Posterior vena cava (tissue), 2 donors: ENCODE measurements at regions of chr1 and their contacts with region 1.

Region 1: GRCh38 chr1:205273551-205273982 is 45.8 kb downstream of the TMCC2 start:
- DNase-seq: peak; percentile 95

Region 2: DNA sequence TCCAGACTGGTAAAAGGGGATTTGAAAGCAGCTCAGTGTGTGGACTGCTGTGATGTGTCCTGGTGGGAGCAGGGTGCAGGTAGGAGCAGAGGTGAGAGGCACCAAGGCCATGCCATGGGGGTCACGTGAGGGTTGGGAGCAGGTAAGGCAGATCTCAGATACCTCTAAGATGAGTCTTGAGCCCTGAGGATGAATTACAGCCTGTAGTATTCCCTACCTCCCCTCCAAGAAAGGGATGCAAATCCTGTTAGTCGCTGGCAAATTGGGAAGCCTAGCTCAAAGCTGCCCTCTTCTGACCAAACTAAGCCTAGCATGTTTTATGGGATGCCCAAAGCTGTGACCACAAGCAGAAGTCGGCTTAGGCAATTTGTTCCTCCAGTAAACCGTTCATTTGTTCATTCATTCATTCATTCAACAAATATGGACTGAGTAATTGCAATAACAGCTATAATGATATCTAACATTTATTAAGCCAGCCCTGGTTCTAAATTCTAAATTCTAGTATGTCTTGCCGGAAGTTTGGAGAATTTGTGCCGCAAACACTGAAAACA is 51.8 kb after region 1 on chr1:
- intact Hi-C with region 1: loop called (anchors 2 kb)
- DNase-seq: no peak

Region 3: DNA sequence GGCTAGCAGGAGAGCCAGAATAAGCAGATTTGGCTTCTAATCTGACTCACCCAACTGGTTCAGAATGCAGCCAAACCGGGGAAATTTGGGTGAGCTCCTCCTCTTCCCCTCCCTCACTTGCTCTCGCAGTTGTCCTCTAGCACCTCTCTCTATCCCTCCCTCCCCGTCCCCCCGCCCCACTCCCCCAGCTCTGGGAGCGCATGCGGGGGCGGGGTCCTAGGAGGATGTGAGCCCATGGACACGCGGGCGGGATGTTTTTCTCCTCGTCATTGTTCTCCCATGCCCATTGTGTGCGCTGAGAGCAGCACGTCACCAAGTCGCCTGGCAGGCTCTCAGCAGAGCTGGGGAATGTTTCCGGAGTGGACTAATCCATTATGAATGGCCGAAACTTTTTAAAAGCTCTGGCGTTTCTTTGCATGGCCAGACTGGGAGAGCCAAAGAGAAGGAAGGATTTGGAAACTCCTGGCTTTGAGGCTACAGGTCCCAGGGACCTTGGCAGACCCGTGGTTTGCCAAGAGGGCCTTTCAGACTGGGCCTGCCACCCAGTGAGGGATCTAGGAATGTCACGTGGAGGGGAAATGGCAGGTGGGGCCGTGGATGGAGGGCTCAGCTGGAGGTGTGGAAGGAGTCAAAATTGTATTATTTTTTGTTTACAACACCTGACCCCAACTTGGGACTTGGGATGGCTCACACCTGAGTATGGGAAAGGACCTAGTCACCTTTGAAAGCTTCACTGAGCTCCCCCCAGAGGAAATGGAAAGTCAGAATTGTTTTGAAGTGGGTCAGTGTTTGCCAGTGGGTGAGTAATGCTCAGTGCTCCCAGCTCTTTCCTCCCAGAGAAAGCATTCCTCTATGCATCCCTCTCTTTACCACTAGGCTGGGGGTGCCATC is 270.1 kb after region 1 on chr1:
- intact Hi-C with region 1: no loop called
- DNase-seq: peak; percentile 95